ENCODE measurements at regions of chr16 and their contacts with region 1.

Region 1: GRCh38 chr16:75238132-75238852 is 13.1 kb downstream of the BCAR1 start:
- DNase-seq: no peak
- ATAC-seq: no peak
- H3K4me3 ChIP-seq: no peak overlapping the region
- H3K4me3 Mint-ChIP-seq: no peak overlapping the region
- H3K27ac ChIP-seq: no peak overlapping the region
- H3K27ac Mint-ChIP-seq: no peak overlapping the region
- H3K4me1 ChIP-seq: peaks cover 9% of the 10 kb centered on the region
- H3K4me1 Mint-ChIP-seq: no peaks in the 10 kb centered on the region
- H3K27me3 ChIP-seq: no peaks in the 10 kb centered on the region
- H3K27me3 Mint-ChIP-seq: no peaks in the 10 kb centered on the region
- CTCF ChIP-seq: no peak

Region 2: GRCh38 chr16:75379911-75380847 is 141.9 kb after region 1 on chr16:
- CTCF ChIA-PET with region 1: interaction called, 18 read pairs
- POLR2A ChIA-PET with region 1: interaction called, 12 read pairs
- intact Hi-C with region 1: loop called in 1 of 2 experiments (anchors 1 kb)
- DNase-seq: peak in 13 of 14 experiments; percentile 16 to 82 (median 36)
- ATAC-seq: peak; percentile 91
- H3K4me3 ChIP-seq: peak overlapping the region; percentile 20
- H3K4me3 Mint-ChIP-seq: peak overlapping the region; percentile 78
- H3K27ac ChIP-seq: peak overlapping the region in 1 of 2 donors; percentile 43
- H3K27ac Mint-ChIP-seq: peak overlapping the region; percentile 57
- H3K4me1 ChIP-seq: peaks cover 23% of the 10 kb centered on the region
- H3K4me1 Mint-ChIP-seq: peaks cover 61% of the 10 kb centered on the region
- H3K27me3 ChIP-seq: no peaks in the 10 kb centered on the region
- H3K27me3 Mint-ChIP-seq: no peaks in the 10 kb centered on the region
- CTCF ChIP-seq: no peak

Region 3: GRCh38 chr16:75385507-75386152 is 147.3 kb after region 1 on chr16:
- CTCF ChIA-PET with region 1: interaction called, 18 read pairs
- POLR2A ChIA-PET with region 1: interaction called, 12 read pairs
- intact Hi-C with region 1: loop called (anchors 1 kb)
- DNase-seq: peak in 3 of 14 experiments; percentile 68 to 82 (median 81)
- ATAC-seq: peak; percentile 60
- H3K4me3 ChIP-seq: no peak overlapping the region
- H3K4me3 Mint-ChIP-seq: no peak overlapping the region
- H3K27ac ChIP-seq: no peak overlapping the region
- H3K27ac Mint-ChIP-seq: no peak overlapping the region
- H3K4me1 ChIP-seq: peaks cover 14% of the 10 kb centered on the region
- H3K4me1 Mint-ChIP-seq: peaks cover 33% of the 10 kb centered on the region
- H3K27me3 ChIP-seq: no peaks in the 10 kb centered on the region
- H3K27me3 Mint-ChIP-seq: no peaks in the 10 kb centered on the region
- CTCF ChIP-seq: peak; percentile 86

Region 4: GRCh38 chr16:75402821-75403475 is 164.7 kb after region 1 on chr16:
- CTCF ChIA-PET with region 1: interaction called, 14 read pairs
- POLR2A ChIA-PET with region 1: no interaction called
- intact Hi-C with region 1: loop called (anchors 1 to 5 kb)
- DNase-seq: peak in 3 of 14 experiments; percentile 42 to 55 (median 54)
- ATAC-seq: peak; percentile 57
- H3K4me3 ChIP-seq: no peak overlapping the region
- H3K4me3 Mint-ChIP-seq: no peak overlapping the region
- H3K27ac ChIP-seq: no peak overlapping the region
- H3K27ac Mint-ChIP-seq: no peak overlapping the region
- H3K4me1 ChIP-seq: no peaks in the 10 kb centered on the region
- H3K4me1 Mint-ChIP-seq: peaks cover 4% of the 10 kb centered on the region
- H3K27me3 ChIP-seq: no peaks in the 10 kb centered on the region
- H3K27me3 Mint-ChIP-seq: no peaks in the 10 kb centered on the region
- CTCF ChIP-seq: peak; percentile 76

Region 5: GRCh38 chr16:75764154-75764768 is 526.0 kb after region 1 on chr16:
- CTCF ChIA-PET with region 1: no interaction called
- POLR2A ChIA-PET with region 1: no interaction called
- intact Hi-C with region 1: loop called in 1 of 2 experiments (anchors 10 kb)
- DNase-seq: peak; percentile 31 to 84 (median 44)
- ATAC-seq: peak; percentile 97
- H3K4me3 ChIP-seq: no peak overlapping the region
- H3K4me3 Mint-ChIP-seq: no peak overlapping the region
- H3K27ac ChIP-seq: no peak overlapping the region
- H3K27ac Mint-ChIP-seq: no peak overlapping the region
- H3K4me1 ChIP-seq: peaks cover 6% of the 10 kb centered on the region
- H3K4me1 Mint-ChIP-seq: no peaks in the 10 kb centered on the region
- H3K27me3 ChIP-seq: peaks cover 0 to 3% of the 10 kb centered on the region in 2 experiments
- H3K27me3 Mint-ChIP-seq: no peaks in the 10 kb centered on the region
- CTCF ChIP-seq: peak; percentile 82